Natural killer cell (primary cell): ENCODE measurements at regions of chr6 and their contacts with region 1.

Region 1: GRCh38 chr6:26064619-26065257 is 22.5 kb upstream of the HFE start:
- DNase-seq: peak; percentile 19 to 82
- ATAC-seq: peak; percentile 75
- H3K4me3 ChIP-seq: no peak overlapping the region
- H3K4me3 Mint-ChIP-seq: no peak overlapping the region
- H3K27ac ChIP-seq: no peak overlapping the region
- H3K27ac Mint-ChIP-seq: no peak overlapping the region
- H3K4me1 ChIP-seq: no peaks in the 10 kb centered on the region
- H3K4me1 Mint-ChIP-seq: peaks cover 4 to 12% of the 10 kb centered on the region in 2 donors
- H3K27me3 ChIP-seq: no peaks in the 10 kb centered on the region
- H3K27me3 Mint-ChIP-seq: peaks cover 0 to 10% of the 10 kb centered on the region in 2 donors
- CTCF ChIP-seq: peak; percentile 90

Region 2: DNA sequence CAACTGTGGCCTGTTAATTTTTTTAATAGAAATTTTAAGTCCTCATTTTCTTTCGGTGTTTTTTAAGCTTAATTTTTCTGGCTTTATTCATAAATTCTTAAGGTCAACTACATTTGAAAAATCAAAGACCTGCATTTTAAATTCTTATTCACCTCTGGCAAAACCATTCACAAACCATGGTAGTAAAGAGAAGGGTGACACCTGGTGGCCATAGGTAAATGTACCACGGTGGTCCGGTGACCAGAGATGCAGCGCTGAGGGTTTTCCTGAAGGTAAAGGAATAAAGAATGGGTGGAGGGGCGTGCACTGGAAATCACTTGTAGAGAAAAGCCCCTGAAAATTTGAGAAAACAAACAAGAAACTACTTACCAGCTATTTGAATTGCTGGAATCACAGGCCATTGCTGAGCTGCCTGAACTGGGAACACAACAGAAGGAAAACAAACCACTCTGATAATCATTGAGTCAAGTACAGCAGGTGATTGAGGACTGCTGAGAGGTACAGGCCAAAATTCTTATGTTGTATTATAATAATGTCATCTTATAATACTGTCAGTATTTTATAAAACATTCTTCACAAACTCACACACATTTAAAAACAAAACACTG is 32.6 kb after region 1 on chr6:
- intact Hi-C with region 1: loop called (anchors 1 kb)
- DNase-seq: peak; percentile 49 to 89
- ATAC-seq: peak; percentile 71 to 97 (median 88)
- H3K4me3 ChIP-seq: no peak overlapping the region
- H3K4me3 Mint-ChIP-seq: no peak overlapping the region
- H3K27ac ChIP-seq: no peak overlapping the region
- H3K27ac Mint-ChIP-seq: no peak overlapping the region
- H3K4me1 ChIP-seq: no peaks in the 10 kb centered on the region
- H3K4me1 Mint-ChIP-seq: peaks cover 0 to 5% of the 10 kb centered on the region in 2 donors
- H3K27me3 ChIP-seq: no peaks in the 10 kb centered on the region
- H3K27me3 Mint-ChIP-seq: peaks cover 0 to 4% of the 10 kb centered on the region in 2 donors
- CTCF ChIP-seq: peak; percentile 88